ENCODE measurements at regions of chr13 and their contacts with region 1.

Region 1: GRCh38 chr13:29508130-29508875 is 87.2 kb downstream of the SLC7A1 start:
- DNase-seq: peak; percentile 80 to 87
- H3K4me3 ChIP-seq: no peak overlapping the region
- H3K27ac ChIP-seq: no peak overlapping the region
- H3K4me1 ChIP-seq: no peaks in the 10 kb centered on the region
- H3K27me3 ChIP-seq: peaks cover 0 to 25% of the 10 kb centered on the region in 2 donors
- CTCF ChIP-seq: peak; percentile 74 to 95 (median 95)
- POLR2A ChIP-seq: no peak

Region 2: DNA sequence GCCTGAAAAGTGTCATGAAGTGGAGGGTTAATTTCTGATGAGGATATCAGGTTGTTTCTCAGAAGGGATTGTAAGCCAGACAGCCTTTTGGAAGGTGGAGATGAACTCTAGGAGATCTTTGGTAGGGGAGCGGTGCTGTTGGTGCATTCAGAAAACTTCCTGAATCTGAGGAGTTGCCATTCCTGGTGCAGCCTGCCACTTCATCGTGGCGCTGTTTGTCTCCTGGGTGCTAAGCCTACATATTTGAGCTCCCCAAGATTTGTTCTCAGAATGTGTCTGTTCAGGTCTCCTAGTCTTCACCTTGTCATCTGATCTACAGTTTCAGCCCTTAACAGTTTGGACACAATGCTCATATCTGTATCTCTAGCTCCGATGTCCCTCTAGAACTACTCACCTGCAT is 402.5 kb before region 1 on chr13:
- intact Hi-C with region 1: no loop called
- DNase-seq: no peak
- H3K4me3 ChIP-seq: no peak overlapping the region
- H3K27ac ChIP-seq: no peak overlapping the region
- H3K4me1 ChIP-seq: no peaks in the 10 kb centered on the region
- H3K27me3 ChIP-seq: no peaks in the 10 kb centered on the region
- CTCF ChIP-seq: no peak
- POLR2A ChIP-seq: no peak

Region 3: GRCh38 chr13:29319451-29319850 is 188.9 kb before region 1 on chr13:
- intact Hi-C with region 1: no loop called
- DNase-seq: no peak
- H3K4me3 ChIP-seq: no peak overlapping the region
- H3K27ac ChIP-seq: no peak overlapping the region
- H3K4me1 ChIP-seq: no peaks in the 10 kb centered on the region
- H3K27me3 ChIP-seq: no peaks in the 10 kb centered on the region
- CTCF ChIP-seq: no peak
- POLR2A ChIP-seq: no peak

Region 4: GRCh38 chr13:30968846-30969245 is 1460.5 kb after region 1 on chr13:
- intact Hi-C with region 1: loop called (anchors 5 kb)
- DNase-seq: no peak
- H3K4me3 ChIP-seq: no peak overlapping the region
- H3K27ac ChIP-seq: peak overlapping the region; percentile 81 to 85
- H3K4me1 ChIP-seq: peaks cover 0 to 3% of the 10 kb centered on the region in 2 donors
- H3K27me3 ChIP-seq: no peaks in the 10 kb centered on the region
- CTCF ChIP-seq: no peak
- POLR2A ChIP-seq: no peak